ENCODE measurements at regions of chr21 and their contacts with region 1.

Region 1: GRCh38 chr21:20253261-20253660 is 744.9 kb upstream of the NCAM2 start:
- DNase-seq: no peak
- H3K4me3 ChIP-seq: no peak overlapping the region
- H3K27ac ChIP-seq: no peak overlapping the region
- H3K4me1 ChIP-seq: peaks cover 0 to 4% (median 0%) of the 10 kb centered on the region in 4 donors
- H3K27me3 ChIP-seq: no peaks in the 10 kb centered on the region
- CTCF ChIP-seq: no peak
- EP300 ChIP-seq: no peak
- POLR2A ChIP-seq: no peak

Region 2: DNA sequence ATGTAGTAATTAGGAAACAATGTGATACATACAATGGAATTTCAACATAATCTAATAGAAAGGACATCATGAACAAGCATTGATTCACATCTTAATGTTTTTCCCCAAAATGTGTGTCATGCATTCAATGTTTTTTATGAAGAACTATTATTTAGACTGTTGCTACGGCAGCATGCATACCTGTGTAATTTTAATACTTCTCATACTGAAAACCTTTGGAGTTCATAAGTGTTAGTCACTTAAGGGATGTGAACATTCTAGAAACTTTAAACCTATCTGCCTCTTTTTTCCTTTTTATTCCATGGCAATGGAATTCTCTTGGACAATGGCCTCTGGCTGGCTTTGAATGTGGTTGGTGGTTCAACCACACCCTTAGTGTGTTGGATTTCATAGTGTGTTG is 1898.3 kb before region 1 on chr21:
- in situ Hi-C with region 1: no loop called
- intact Hi-C with region 1: no loop called
- DNase-seq: no peak
- H3K4me3 ChIP-seq: no peak overlapping the region
- H3K27ac ChIP-seq: no peak overlapping the region
- H3K4me1 ChIP-seq: no peaks in the 10 kb centered on the region
- H3K27me3 ChIP-seq: no peaks in the 10 kb centered on the region
- CTCF ChIP-seq: no peak
- EP300 ChIP-seq: no peak
- POLR2A ChIP-seq: no peak

Region 3: GRCh38 chr21:20603236-20603635 is 350.0 kb after region 1 on chr21:
- in situ Hi-C with region 1: no loop called
- intact Hi-C with region 1: loop called (anchors 5 kb)
- DNase-seq: no peak
- H3K4me3 ChIP-seq: no peak overlapping the region
- H3K27ac ChIP-seq: no peak overlapping the region
- H3K4me1 ChIP-seq: no peaks in the 10 kb centered on the region
- H3K27me3 ChIP-seq: no peaks in the 10 kb centered on the region
- CTCF ChIP-seq: no peak
- EP300 ChIP-seq: no peak
- POLR2A ChIP-seq: no peak

Measured in transverse colon (tissue), 4 donors.